ENCODE measurements at regions of chrX and their contacts with region 1.

Region 1: DNA sequence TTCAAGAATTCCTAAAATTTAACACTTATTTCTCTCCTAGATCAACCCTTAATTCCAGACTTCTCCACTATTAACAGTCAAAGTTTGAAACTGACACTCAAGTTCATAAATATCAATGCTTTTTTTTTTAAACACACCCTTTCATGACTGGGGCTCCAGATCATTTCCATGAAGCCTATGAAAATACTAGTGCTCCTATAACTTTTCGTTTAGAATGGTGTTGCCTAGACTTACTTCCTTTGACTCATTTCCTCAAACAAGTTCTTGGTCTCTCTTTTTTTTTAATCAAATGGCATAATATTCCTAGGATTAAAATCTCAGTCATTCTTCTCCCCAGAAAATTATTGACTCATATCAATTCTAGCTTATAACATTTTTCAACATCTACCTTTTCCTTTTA is 13.1 kb downstream of the ZMAT1 start:
- DNase-seq: peak; percentile 69
- H3K4me3 ChIP-seq: no peak overlapping the region
- H3K27ac ChIP-seq: peak overlapping the region; percentile 34
- H3K4me1 ChIP-seq: peaks cover 8% of the 10 kb centered on the region
- H3K27me3 ChIP-seq: no peaks in the 10 kb centered on the region
- CTCF ChIP-seq: no peak
- POLR2A ChIP-seq: no peak

Region 2: DNA sequence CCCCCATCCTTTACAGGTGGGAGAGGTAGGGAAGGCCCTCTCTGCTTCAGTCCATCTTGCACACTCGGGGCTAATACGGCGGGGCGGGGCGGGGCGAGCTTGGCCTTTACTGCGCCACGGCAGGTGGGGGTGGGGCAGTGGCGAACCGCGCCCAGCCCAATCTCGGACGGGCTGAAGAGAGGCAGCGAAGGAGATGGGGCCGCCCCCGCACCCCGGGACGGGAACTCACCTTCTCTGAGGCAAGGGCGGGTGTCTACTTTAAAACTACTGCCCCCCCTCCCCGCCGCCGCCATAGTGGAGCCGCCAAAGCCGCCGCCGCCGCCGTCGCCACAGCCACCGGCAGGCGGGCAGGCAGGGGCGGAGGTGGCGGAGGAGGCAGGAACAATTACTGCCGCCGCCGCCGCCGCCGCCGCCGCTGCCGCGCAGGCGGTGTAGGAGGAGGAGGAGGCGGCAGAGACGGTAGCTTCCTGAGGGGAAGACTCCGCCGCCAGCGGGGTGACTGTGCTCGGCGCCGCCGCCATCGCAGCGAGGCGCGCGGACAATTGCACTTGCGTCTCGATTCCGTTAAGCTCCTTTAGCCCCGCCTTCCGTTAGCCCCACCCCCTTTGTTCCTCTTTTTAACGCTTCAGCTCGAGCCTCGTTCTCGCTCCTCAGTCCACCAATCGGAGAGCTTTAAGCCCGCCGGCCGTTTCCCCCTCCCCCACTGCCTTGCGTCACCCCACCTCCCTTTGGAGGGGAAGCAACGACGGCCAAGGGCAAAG is 12.9 kb after region 1 on chrX and contains the start of gene ZMAT1:
- CTCF ChIA-PET with region 1: interaction called, 9 read pairs
- POLR2A ChIA-PET with region 1: interaction called, 18 read pairs
- dilution Hi-C with region 1: no loop called
- intact Hi-C with region 1: no loop called
- DNase-seq: peak; percentile 94
- H3K4me3 ChIP-seq: peak within 1 kb of the TSS; percentile 23 to 58 (median 46)
- H3K27ac ChIP-seq: peak within 1 kb of the TSS; percentile 63
- H3K4me1 ChIP-seq: peaks cover 5% of the 10 kb centered on the region
- H3K27me3 ChIP-seq: no peaks in the 10 kb centered on the region
- CTCF ChIP-seq: no peak
- POLR2A ChIP-seq: peak; percentile 65
- total RNA-seq, gene ZMAT1: 3.7 and 4.3 TPM in 2 replicates

Region 3: DNA sequence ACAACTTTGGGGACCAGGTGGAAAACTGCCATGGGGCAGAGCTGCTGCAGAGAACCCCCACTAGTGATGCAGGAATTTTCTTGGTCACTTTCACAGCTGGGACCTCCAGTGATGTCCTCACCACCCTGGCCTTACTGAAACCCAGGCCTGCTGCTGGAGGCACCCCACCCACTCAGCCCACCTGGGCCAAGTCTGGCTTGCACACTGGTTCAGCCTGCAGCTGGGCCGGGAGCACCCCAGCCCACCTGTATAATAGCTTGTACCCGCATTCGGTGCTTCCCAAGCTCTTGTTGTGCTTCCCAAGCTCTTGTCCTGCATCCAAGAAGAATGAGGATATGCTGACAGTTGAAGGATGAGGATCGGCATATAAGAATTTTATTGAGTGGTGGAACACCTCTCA is 99.5 kb after region 1 on chrX:
- CTCF ChIA-PET with region 1: no interaction called
- POLR2A ChIA-PET with region 1: no interaction called
- dilution Hi-C with region 1: no loop called
- intact Hi-C with region 1: no loop called
- DNase-seq: no peak
- H3K4me3 ChIP-seq: no peak overlapping the region
- H3K27ac ChIP-seq: no peak overlapping the region
- H3K4me1 ChIP-seq: no peaks in the 10 kb centered on the region
- H3K27me3 ChIP-seq: no peaks in the 10 kb centered on the region
- CTCF ChIP-seq: no peak
- POLR2A ChIP-seq: no peak

Region 4: DNA sequence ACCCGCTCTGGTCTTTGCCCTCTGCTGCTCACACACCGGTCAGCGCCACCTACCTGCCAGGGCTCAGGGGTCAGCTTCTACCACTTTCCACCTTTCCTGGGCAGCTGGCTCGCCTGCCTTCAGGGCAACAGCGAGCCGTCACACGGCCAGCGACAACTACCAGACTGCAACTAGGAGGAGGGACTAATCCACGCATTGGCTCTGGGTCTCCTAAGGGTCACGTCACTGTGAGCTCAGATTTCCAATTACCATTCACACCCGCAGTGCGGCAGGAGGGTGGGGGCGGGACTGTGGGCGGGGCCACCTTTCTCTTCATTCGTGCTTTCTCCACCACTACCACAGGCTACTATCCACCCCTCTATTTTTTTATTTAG is 237.0 kb after region 1 on chrX and contains the start of gene BEX5:
- CTCF ChIA-PET with region 1: no interaction called
- POLR2A ChIA-PET with region 1: no interaction called
- dilution Hi-C with region 1: no loop called
- intact Hi-C with region 1: no loop called
- DNase-seq: peak; percentile 51
- H3K4me3 ChIP-seq: peak within 1 kb of the TSS in 2 of 3 experiments; percentile 27 to 32
- H3K27ac ChIP-seq: no peak within 1 kb of the TSS
- H3K4me1 ChIP-seq: peaks cover 2% of the 10 kb centered on the region
- H3K27me3 ChIP-seq: no peaks in the 10 kb centered on the region
- CTCF ChIP-seq: no peak
- POLR2A ChIP-seq: no peak
- total RNA-seq, gene BEX5: not detected in 2 replicates